ENCODE measurements at regions of chr10 and their contacts with region 1.

Region 1: GRCh38 chr10:9294865-9295264 is 1240.4 kb downstream of the GATA3 start:
- DNase-seq: no peak
- H3K4me3 Mint-ChIP-seq: no peak overlapping the region
- H3K27ac Mint-ChIP-seq: peak overlapping the region; percentile 73
- H3K4me1 Mint-ChIP-seq: peaks cover 21% of the 10 kb centered on the region
- H3K27me3 Mint-ChIP-seq: peaks cover 9% of the 10 kb centered on the region

Region 2: DNA sequence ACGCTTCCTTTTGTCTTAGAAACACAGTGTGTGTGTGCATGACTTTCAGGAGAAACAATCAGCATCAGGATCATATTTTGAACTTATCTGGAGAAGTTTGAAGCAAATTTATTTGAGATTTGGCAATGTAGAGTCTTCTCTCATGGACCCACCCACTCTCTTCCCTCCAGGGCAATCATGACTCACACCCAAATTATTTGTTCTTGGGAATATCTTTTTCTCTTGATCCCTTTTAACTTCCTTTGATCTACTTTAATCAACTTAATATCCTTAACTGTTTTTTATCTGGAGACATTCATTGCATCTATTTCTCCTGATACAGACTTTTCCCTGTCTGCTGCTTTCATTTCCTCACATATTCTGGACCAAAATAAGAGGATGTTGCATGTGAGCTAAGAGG is 66.1 kb before region 1 on chr10:
- CTCF ChIA-PET with region 1: no interaction called
- POLR2A ChIA-PET with region 1: no interaction called
- intact Hi-C with region 1: loop called (anchors 2 kb)
- DNase-seq: no peak
- H3K4me3 Mint-ChIP-seq: no peak overlapping the region
- H3K27ac Mint-ChIP-seq: no peak overlapping the region
- H3K4me1 Mint-ChIP-seq: peaks cover 26% of the 10 kb centered on the region
- H3K27me3 Mint-ChIP-seq: peaks cover 30% of the 10 kb centered on the region